Activated CD4-positive, alpha-beta T cell treated with anti-CD3 and anti-CD28 coated beads, Interleukin-2, amount 10 ng/mL, durations not matched to agents 24 days and 14 days (primary cell): ENCODE measurements at regions of chr17 and their contacts with region 1.

Region 1: DNA sequence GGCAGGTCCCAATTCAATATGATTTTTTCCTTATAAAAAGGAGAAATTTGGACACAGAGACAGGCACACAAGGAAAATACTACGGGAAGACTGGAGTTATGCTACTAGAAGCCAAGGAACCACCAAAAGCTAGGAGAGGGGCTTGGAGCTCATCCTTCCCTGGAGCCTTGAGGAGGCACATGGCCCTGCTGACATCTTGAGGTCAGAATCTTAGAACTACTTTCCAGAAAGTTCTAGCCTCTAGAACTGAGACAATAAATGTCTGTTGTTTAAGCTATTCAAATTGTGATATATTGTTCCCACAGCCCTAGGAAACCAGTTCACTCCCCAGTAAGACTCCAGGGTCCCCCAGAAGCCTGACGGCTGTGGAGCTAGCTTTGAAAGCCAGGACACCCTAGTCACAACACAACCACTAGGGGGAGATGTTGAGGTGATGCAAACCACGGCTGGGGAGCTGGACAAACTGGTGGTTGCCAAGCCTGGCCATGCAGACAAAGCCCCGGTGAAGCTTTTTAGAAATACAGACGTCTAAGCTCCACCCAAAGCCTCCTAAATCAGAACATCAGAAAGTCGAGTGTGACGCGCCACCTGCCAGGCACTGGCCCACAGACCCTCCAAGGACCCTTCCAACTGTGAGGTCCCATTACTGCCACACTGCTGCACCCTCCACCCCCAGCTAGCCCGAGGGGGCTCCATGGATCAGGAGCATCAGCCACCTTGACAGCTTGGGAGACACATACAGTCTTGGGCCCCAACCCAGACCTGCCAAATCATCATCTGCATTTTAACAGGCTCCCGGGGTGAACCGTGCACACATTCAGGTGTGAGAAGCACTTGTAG is 106.4 kb downstream of the SLC39A11 start:
- DNase-seq: peak; percentile 86
- H3K4me3 Mint-ChIP-seq: no peak overlapping the region
- H3K27ac Mint-ChIP-seq: no peak overlapping the region
- H3K4me1 Mint-ChIP-seq: peaks cover 2% of the 10 kb centered on the region
- H3K27me3 Mint-ChIP-seq: no peaks in the 10 kb centered on the region

Region 2: DNA sequence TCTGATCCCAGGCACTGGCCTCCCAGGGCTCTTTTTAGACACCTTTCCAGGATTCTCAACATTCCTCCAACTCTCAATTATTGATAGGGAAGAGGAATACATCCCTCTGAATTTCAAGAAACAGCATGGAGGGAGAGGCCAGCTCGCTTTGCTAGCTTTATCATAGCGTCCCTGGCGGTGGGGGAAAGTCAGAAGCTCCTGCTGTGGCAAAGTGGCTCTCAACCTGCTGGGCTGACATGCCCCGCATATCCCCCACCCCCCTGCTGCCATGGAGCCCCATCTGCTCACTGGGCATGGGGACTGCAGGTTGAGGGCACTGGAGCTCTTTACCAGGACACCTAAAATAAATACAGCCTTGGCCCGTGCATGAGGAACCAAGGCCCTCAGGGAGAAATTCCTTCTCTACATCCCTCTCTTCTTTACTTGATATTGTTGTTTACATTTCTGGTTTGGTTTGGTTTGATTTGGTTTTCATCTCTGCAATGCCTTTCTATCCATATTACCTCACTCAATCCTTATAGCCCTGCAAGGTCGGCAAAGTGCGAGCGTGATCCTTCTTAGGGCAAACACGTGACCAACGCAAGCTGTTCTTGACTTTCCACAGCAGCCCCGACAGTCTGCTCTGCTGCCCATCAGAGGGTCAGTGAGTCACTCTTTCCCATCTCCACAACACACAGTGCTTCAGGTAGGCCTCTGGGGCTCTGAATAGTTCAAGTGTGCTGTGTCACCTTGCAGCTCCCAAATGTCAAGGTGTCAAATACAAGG is 33.7 kb before region 1 on chr17:
- intact Hi-C with region 1: no loop called
- DNase-seq: no peak
- H3K4me3 Mint-ChIP-seq: no peak overlapping the region
- H3K27ac Mint-ChIP-seq: no peak overlapping the region
- H3K4me1 Mint-ChIP-seq: peaks cover 1% of the 10 kb centered on the region
- H3K27me3 Mint-ChIP-seq: no peaks in the 10 kb centered on the region

Region 3: DNA sequence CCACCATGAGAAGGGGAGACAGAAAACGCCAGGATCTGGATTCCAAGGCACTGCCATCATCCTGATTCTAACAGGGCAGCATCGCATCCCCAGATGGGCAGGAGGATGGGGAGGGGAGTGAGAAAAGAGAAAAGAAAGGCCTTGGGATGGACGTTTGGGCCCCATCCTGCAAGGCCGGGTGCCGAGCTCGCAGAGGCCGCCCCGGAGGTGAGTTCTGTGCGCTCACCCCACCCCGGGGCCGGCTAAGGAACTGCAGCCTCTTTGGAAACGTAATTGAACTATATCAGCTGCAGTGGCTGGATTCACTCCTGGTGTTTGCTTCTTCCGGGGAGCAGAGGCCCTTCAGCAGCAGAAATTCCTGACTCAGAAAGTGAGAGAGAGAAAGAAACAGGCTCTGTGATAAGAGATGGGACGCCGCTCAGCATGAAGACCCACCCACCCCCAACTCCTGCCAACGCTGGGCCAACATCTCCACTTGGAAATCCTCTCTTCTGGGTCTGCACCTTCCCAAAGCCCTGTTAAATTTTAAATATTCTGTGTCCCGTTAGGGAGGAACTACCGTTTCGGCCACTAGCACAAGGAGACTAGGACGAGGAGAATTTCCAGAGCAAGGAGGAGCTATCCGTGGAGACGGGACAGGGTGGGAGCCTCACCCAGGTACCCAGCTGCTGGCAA is 170.2 kb after region 1 on chr17:
- intact Hi-C with region 1: loop called (anchors 1 kb)
- DNase-seq: peak; percentile 87
- H3K4me3 Mint-ChIP-seq: no peak overlapping the region
- H3K27ac Mint-ChIP-seq: no peak overlapping the region
- H3K4me1 Mint-ChIP-seq: peaks cover 4% of the 10 kb centered on the region
- H3K27me3 Mint-ChIP-seq: peaks cover 15% of the 10 kb centered on the region

Region 4: GRCh38 chr17:73359987-73360410 is 373.9 kb after region 1 on chr17:
- intact Hi-C with region 1: loop called (anchors 10 kb)
- DNase-seq: no peak
- H3K4me3 Mint-ChIP-seq: no peak overlapping the region
- H3K27ac Mint-ChIP-seq: no peak overlapping the region
- H3K4me1 Mint-ChIP-seq: no peaks in the 10 kb centered on the region
- H3K27me3 Mint-ChIP-seq: no peaks in the 10 kb centered on the region